Psoas muscle (tissue), 8 donors: ENCODE measurements at regions of chr4 and their contacts with region 1.

Region 1: GRCh38 chr4:151408630-151409469 is at the start of gene FHIP1A:
- DNase-seq: peak; percentile 78 to 93
- ATAC-seq: peak; percentile 82 to 92 (median 85)
- H3K4me3 ChIP-seq: peak within 1 kb of the TSS; percentile 74
- H3K27ac ChIP-seq: peak within 1 kb of the TSS; percentile 85
- H3K4me1 ChIP-seq: peaks cover 12% of the 10 kb centered on the region
- H3K27me3 ChIP-seq: no peaks in the 10 kb centered on the region
- CTCF ChIP-seq: peak; percentile 19
- total RNA-seq, gene FHIP1A: 37.7 to 46.7 (median 44.9) TPM

Region 2: GRCh38 chr4:151524610-151525009 is 115.8 kb after region 1 on chr4:
- intact Hi-C with region 1: loop called in 1 of 2 experiments (anchors 5 kb)
- DNase-seq: no peak
- ATAC-seq: peak in 3 of 4 donors; percentile 31 to 86 (median 39)
- H3K4me3 ChIP-seq: no peak overlapping the region
- H3K27ac ChIP-seq: peak overlapping the region; percentile 77
- H3K4me1 ChIP-seq: peaks cover 62% of the 10 kb centered on the region
- H3K27me3 ChIP-seq: no peaks in the 10 kb centered on the region
- CTCF ChIP-seq: no peak

Region 3: GRCh38 chr4:151604238-151604637 is 195.4 kb after region 1 on chr4:
- intact Hi-C with region 1: loop called in 1 of 2 experiments (anchors 10 kb)
- DNase-seq: no peak
- ATAC-seq: peak; percentile 32 to 66 (median 45)
- H3K4me3 ChIP-seq: no peak overlapping the region
- H3K27ac ChIP-seq: no peak overlapping the region
- H3K4me1 ChIP-seq: no peaks in the 10 kb centered on the region
- H3K27me3 ChIP-seq: no peaks in the 10 kb centered on the region
- CTCF ChIP-seq: peak; percentile 43